ENCODE measurements at regions of chr2 and their contacts with region 1.

Region 1: DNA sequence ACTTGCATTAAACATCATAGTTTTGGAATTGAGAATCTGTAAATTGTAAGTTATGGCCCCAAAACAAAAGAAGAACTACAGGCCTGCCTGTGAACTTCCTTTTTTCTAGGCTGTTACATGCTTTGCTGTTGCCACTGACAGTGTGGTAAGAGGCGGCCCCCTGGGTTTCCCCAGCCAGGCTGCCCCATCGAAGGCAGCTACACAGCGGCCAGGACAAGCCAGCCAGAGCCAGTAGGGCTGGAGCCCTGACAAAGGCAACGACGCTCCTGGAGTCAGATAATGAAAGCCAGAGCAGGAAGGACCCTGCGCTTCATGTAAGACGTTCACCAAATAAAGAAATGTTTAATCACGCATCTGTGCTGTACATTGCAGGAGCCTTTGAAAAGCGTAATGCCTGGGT is 55.0 kb downstream of the ANKRD44 start:
- DNase-seq: peak; percentile 64 to 92 (median 74)
- H3K4me3 ChIP-seq: peak overlapping the region in 1 of 2 donors; percentile 12
- H3K4me3 Mint-ChIP-seq: peak overlapping the region; percentile 61 to 92 (median 82)
- H3K27ac ChIP-seq: peak overlapping the region; percentile 70
- H3K27ac Mint-ChIP-seq: peak overlapping the region; percentile 93 to 98 (median 96)
- H3K4me1 ChIP-seq: peaks cover 86% of the 10 kb centered on the region
- H3K4me1 Mint-ChIP-seq: peaks cover 59 to 80% (median 69%) of the 10 kb centered on the region in 4 donors
- H3K27me3 ChIP-seq: no peaks in the 10 kb centered on the region
- H3K27me3 Mint-ChIP-seq: no peaks in the 10 kb centered on the region

Region 2: DNA sequence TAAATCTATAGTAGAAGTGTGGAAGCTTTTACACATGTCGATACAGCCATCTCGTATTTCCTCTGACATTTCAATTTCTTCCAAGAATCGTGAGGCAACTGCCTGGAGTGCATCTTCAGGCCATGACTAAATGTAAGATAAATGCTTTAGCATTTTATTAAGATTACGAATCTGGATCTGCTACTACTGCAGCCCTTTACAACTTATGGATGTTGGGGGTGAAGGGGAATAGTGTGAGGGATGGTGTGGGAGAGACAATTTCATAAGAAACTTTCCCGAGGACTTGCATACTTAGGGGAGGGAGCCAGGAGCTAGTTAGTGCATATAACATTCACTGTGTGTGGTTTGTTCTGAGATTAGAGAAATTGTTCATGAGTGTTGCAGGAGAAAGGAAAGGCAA is 1393.7 kb before region 1 on chr2:
- CTCF ChIA-PET with region 1: no interaction called
- POLR2A ChIA-PET with region 1: no interaction called
- intact Hi-C with region 1: no loop called
- DNase-seq: no peak
- H3K4me3 ChIP-seq: no peak overlapping the region
- H3K4me3 Mint-ChIP-seq: no peak overlapping the region
- H3K27ac ChIP-seq: no peak overlapping the region
- H3K27ac Mint-ChIP-seq: no peak overlapping the region
- H3K4me1 ChIP-seq: no peaks in the 10 kb centered on the region
- H3K4me1 Mint-ChIP-seq: peaks cover 0 to 3% (median under 1%) of the 10 kb centered on the region in 4 donors
- H3K27me3 ChIP-seq: no peaks in the 10 kb centered on the region
- H3K27me3 Mint-ChIP-seq: peaks cover 13 to 15% of the 10 kb centered on the region in 2 donors

Region 3: DNA sequence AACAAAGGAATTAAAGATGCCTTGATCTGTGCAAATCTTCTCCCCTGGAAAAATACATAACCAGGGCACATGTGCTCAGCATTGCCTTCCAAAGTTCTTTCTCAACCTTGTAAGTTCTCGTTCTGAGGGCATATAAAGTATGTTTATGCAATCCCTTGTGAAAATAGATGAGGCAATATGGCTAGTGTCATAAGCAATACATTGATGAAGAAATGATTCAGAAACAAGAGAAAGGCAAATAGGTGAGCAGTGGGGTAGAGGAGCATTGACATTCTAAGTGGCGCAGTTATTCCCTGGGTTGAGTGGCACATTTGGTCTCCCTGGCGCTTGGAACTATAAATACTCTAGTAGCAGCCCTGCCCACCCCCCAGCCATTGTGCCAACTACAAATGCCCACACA is 271.6 kb before region 1 on chr2:
- CTCF ChIA-PET with region 1: no interaction called
- POLR2A ChIA-PET with region 1: no interaction called
- intact Hi-C with region 1: no loop called
- DNase-seq: no peak
- H3K4me3 ChIP-seq: no peak overlapping the region
- H3K4me3 Mint-ChIP-seq: no peak overlapping the region
- H3K27ac ChIP-seq: no peak overlapping the region
- H3K27ac Mint-ChIP-seq: no peak overlapping the region
- H3K4me1 ChIP-seq: peaks cover 9% of the 10 kb centered on the region
- H3K4me1 Mint-ChIP-seq: peaks cover 10 to 12% (median 10%) of the 10 kb centered on the region in 4 donors
- H3K27me3 ChIP-seq: no peaks in the 10 kb centered on the region
- H3K27me3 Mint-ChIP-seq: no peaks in the 10 kb centered on the region

Region 4: GRCh38 chr2:197209742-197210408 is 45.7 kb before region 1 on chr2:
- CTCF ChIA-PET with region 1: interaction called, 9 read pairs
- POLR2A ChIA-PET with region 1: interaction called, 1,394 read pairs
- intact Hi-C with region 1: loop called (anchors 2 kb)
- DNase-seq: peak in 4 of 5 donors; percentile 37 to 86 (median 40)
- H3K4me3 ChIP-seq: peak overlapping the region in 1 of 2 donors; percentile 12
- H3K4me3 Mint-ChIP-seq: peak overlapping the region; percentile 38 to 88 (median 74)
- H3K27ac ChIP-seq: peak overlapping the region; percentile 68
- H3K27ac Mint-ChIP-seq: peak overlapping the region; percentile 88 to 100 (median 98)
- H3K4me1 ChIP-seq: peaks cover 100% of the 10 kb centered on the region
- H3K4me1 Mint-ChIP-seq: peaks cover 84 to 100% (median 93%) of the 10 kb centered on the region in 4 donors
- H3K27me3 ChIP-seq: no peaks in the 10 kb centered on the region
- H3K27me3 Mint-ChIP-seq: peaks cover 0 to 3% of the 10 kb centered on the region in 2 donors

Region 5: DNA sequence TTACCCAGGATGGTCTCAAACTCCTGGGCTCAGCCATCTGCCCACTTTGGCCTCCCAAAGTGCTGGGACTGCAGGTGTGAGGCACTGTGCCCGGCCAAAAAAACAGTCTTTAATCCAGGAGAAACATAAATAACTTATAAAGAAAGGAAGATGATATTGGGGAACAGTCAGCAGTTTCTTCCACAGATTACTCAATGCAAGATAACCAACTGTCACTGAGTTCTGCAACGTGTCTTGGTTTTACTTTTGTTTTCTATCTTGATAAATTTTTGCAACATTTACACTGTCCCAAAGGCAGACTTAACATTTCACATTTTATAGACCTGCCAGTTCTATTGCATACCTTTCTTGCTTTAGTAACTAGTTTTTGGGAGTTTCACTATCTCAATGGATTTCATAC is 16.1 kb before region 1 on chr2:
- CTCF ChIA-PET with region 1: interaction called, 10 read pairs
- POLR2A ChIA-PET with region 1: interaction called, 33 read pairs
- intact Hi-C with region 1: loop called (anchors 1 kb)
- DNase-seq: no peak
- H3K4me3 ChIP-seq: peak overlapping the region in 1 of 2 donors; percentile 52
- H3K4me3 Mint-ChIP-seq: peak overlapping the region; percentile 80 to 96 (median 87)
- H3K27ac ChIP-seq: peak overlapping the region; percentile 66
- H3K27ac Mint-ChIP-seq: peak overlapping the region; percentile 87 to 99 (median 95)
- H3K4me1 ChIP-seq: peaks cover 97% of the 10 kb centered on the region
- H3K4me1 Mint-ChIP-seq: peaks cover 70 to 93% (median 78%) of the 10 kb centered on the region in 4 donors
- H3K27me3 ChIP-seq: no peaks in the 10 kb centered on the region
- H3K27me3 Mint-ChIP-seq: no peaks in the 10 kb centered on the region

Region 6: GRCh38 chr2:197268786-197269584 is 13.4 kb after region 1 on chr2:
- CTCF ChIA-PET with region 1: interaction called, 15 read pairs
- POLR2A ChIA-PET with region 1: interaction called, 9 read pairs
- intact Hi-C with region 1: loop called (anchors 1 kb)
- DNase-seq: peak in 3 of 5 donors; percentile 50 to 81 (median 61)
- H3K4me3 ChIP-seq: no peak overlapping the region
- H3K4me3 Mint-ChIP-seq: peak overlapping the region in 7 of 8 donors; percentile 11 to 64 (median 59)
- H3K27ac ChIP-seq: peak overlapping the region; percentile 35
- H3K27ac Mint-ChIP-seq: peak overlapping the region; percentile 77 to 98 (median 87)
- H3K4me1 ChIP-seq: peaks cover 98% of the 10 kb centered on the region
- H3K4me1 Mint-ChIP-seq: peaks cover 71 to 99% (median 89%) of the 10 kb centered on the region in 4 donors
- H3K27me3 ChIP-seq: no peaks in the 10 kb centered on the region
- H3K27me3 Mint-ChIP-seq: no peaks in the 10 kb centered on the region

Region 7: DNA sequence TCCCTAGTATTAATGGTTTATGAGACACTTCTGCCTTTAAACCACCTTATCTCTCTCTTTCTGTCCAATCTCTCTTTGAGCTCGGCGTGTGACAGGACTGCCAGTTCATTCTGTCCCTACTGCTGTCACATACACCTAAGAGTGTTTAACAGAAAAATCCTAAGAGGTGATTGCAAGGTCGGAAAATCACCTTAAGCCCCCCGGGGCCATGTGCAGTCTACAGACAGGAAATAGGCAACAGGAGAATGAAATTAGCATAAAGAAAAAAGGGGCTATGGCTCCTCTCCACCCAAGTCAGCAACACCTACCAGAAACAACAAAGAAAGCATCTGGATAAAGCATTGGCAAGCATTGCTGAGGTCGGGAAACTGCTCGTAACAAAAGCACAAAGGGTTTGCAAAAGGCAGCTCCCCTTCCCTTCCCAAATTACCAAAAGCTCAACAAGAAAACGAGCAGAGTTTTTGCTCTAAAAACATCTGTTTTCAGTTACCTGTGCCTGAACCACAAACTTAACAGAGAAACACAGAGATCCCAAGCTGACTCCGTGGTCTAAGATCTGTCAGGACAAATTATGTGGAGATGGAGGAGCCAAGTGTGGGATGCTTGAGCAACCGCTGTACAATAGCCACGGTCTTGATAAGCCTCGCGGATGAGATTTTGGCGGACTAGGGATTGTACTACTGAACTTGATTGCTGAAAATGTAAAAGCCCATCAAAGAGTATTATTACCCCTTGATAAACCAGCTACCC is 24.6 kb after region 1 on chr2:
- CTCF ChIA-PET with region 1: interaction called, 3 read pairs
- POLR2A ChIA-PET with region 1: interaction called, 14 read pairs
- intact Hi-C with region 1: no loop called
- DNase-seq: no peak
- H3K4me3 ChIP-seq: peak overlapping the region in 1 of 2 donors; percentile 6
- H3K4me3 Mint-ChIP-seq: peak overlapping the region; percentile 27 to 83 (median 74)
- H3K27ac ChIP-seq: peak overlapping the region; percentile 19
- H3K27ac Mint-ChIP-seq: peak overlapping the region; percentile 70 to 95 (median 87)
- H3K4me1 ChIP-seq: peaks cover 95% of the 10 kb centered on the region
- H3K4me1 Mint-ChIP-seq: peaks cover 63 to 90% (median 75%) of the 10 kb centered on the region in 4 donors
- H3K27me3 ChIP-seq: no peaks in the 10 kb centered on the region
- H3K27me3 Mint-ChIP-seq: no peaks in the 10 kb centered on the region

Region 8: DNA sequence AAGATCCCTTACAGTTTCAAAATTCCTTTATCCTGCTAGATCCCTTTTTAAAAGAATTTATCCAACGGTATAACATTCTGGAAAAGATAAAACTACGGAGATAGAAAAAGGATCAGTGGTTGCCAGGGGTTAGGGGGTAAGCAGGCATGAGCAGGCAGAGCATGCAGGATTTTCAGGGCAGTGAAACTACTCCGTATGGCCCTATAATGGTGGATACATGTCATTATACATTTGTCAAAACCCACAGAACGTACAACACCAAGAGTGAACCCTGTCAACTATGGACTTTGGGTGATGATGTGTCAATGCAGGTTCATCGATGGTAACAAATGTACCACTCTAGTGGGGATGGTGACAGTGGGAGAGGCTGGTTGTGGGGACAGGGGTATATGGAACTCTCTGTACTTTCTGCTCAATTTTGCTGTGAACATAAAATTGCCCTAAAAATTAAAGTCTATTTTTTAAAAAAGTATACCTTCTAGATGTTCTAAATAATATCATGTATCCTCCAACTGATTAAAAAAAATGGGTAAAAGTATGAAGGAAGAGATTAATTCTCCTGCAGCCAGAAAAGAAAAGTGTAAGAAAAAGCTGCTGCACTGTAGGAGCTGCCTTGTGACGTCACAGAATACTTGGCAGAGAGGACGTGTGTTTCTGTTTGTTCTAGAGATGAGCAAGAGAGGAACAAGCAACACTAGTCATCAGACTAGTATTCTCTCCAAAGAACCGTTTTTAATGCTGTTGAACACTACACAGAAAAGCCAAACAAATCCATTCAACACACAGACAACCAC is 31.5 kb after region 1 on chr2:
- CTCF ChIA-PET with region 1: no interaction called
- POLR2A ChIA-PET with region 1: interaction called, 606 read pairs
- intact Hi-C with region 1: no loop called
- DNase-seq: peak; percentile 66 to 85 (median 76)
- H3K4me3 ChIP-seq: no peak overlapping the region
- H3K4me3 Mint-ChIP-seq: peak overlapping the region; percentile 68 to 85 (median 82)
- H3K27ac ChIP-seq: peak overlapping the region; percentile 22
- H3K27ac Mint-ChIP-seq: peak overlapping the region; percentile 67 to 99 (median 96)
- H3K4me1 ChIP-seq: peaks cover 99% of the 10 kb centered on the region
- H3K4me1 Mint-ChIP-seq: peaks cover 52 to 88% (median 70%) of the 10 kb centered on the region in 4 donors
- H3K27me3 ChIP-seq: no peaks in the 10 kb centered on the region
- H3K27me3 Mint-ChIP-seq: no peaks in the 10 kb centered on the region

Region 9: GRCh38 chr2:197293252-197294007 is 37.9 kb after region 1 on chr2:
- CTCF ChIA-PET with region 1: no interaction called
- POLR2A ChIA-PET with region 1: interaction called, 606 read pairs
- intact Hi-C with region 1: loop called (anchors 2 kb)
- DNase-seq: peak; percentile 41 to 79 (median 43)
- H3K4me3 ChIP-seq: peak overlapping the region in 1 of 2 donors; percentile 15
- H3K4me3 Mint-ChIP-seq: peak overlapping the region; percentile 77 to 87 (median 82)
- H3K27ac ChIP-seq: peak overlapping the region; percentile 69
- H3K27ac Mint-ChIP-seq: peak overlapping the region; percentile 90 to 99 (median 96)
- H3K4me1 ChIP-seq: peaks cover 100% of the 10 kb centered on the region
- H3K4me1 Mint-ChIP-seq: peaks cover 69 to 94% (median 84%) of the 10 kb centered on the region in 4 donors
- H3K27me3 ChIP-seq: no peaks in the 10 kb centered on the region
- H3K27me3 Mint-ChIP-seq: no peaks in the 10 kb centered on the region

Region 10: DNA sequence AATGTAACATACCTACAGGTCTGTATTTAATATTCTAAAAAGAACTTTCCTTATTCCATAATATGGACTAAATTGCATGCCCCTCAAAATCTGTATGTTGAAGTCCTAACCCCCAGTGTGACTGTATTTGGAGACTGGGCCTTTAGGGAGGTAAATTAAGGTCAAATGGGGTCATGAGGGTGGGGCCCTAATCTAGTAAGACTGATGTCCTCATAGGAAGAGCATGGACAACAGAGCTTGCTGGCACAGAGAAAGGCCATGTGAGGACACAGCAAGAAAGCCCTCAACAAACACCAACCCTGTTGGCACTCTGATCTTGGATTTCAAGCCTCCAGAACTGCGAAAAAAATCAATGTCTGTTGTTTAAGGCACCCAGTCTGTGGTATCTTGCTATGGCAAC is 160.7 kb after region 1 on chr2:
- CTCF ChIA-PET with region 1: no interaction called
- POLR2A ChIA-PET with region 1: no interaction called
- intact Hi-C with region 1: no loop called
- DNase-seq: no peak
- H3K4me3 ChIP-seq: no peak overlapping the region
- H3K4me3 Mint-ChIP-seq: no peak overlapping the region
- H3K27ac ChIP-seq: no peak overlapping the region
- H3K27ac Mint-ChIP-seq: peak overlapping the region in 3 of 7 donors; percentile 2 to 77 (median 65)
- H3K4me1 ChIP-seq: peaks cover 13% of the 10 kb centered on the region
- H3K4me1 Mint-ChIP-seq: peaks cover 8 to 17% (median 15%) of the 10 kb centered on the region in 4 donors
- H3K27me3 ChIP-seq: no peaks in the 10 kb centered on the region
- H3K27me3 Mint-ChIP-seq: no peaks in the 10 kb centered on the region

Region 11: DNA sequence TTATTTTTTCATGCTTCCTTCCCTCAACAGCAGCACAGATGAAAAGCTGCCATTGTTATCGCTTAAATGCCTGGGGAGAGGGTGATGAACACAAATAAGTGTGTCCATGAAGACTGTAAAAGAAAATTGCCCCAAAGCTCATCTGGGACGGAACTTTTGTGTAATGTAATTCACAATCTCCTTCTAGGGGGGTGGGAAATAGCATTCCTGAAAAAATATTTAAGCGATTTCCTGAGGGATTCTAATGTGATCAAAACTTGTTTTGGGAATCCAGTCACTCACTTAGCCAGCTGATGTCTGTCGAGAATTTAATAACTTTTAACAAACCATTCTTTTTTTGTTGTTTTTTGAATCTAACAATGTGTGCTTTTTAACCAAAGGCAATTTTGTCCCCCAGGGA is 976.7 kb after region 1 on chr2:
- CTCF ChIA-PET with region 1: no interaction called
- POLR2A ChIA-PET with region 1: no interaction called
- intact Hi-C with region 1: no loop called
- DNase-seq: no peak
- H3K4me3 ChIP-seq: no peak overlapping the region
- H3K4me3 Mint-ChIP-seq: no peak overlapping the region
- H3K27ac ChIP-seq: no peak overlapping the region
- H3K27ac Mint-ChIP-seq: no peak overlapping the region
- H3K4me1 ChIP-seq: no peaks in the 10 kb centered on the region
- H3K4me1 Mint-ChIP-seq: no peaks in the 10 kb centered on the region
- H3K27me3 ChIP-seq: no peaks in the 10 kb centered on the region
- H3K27me3 Mint-ChIP-seq: peaks cover 4 to 9% of the 10 kb centered on the region in 2 donors